Activated T-helper 1 cell treated with anti-CD3 and anti-CD28 coated beads, Interleukin-12 subunit alpha, Interleukin-12 subunit beta, Interleukin-2, Interleukin-4 antibody, amounts not matched to agents 30 ng/mL and 10 ng/mL and 1 ng/mL, durations not matched to agents 14 hours and 24 hours and 36 hours (primary cell): ENCODE measurements at regions of chr2 and their contacts with region 1.

Region 1: DNA sequence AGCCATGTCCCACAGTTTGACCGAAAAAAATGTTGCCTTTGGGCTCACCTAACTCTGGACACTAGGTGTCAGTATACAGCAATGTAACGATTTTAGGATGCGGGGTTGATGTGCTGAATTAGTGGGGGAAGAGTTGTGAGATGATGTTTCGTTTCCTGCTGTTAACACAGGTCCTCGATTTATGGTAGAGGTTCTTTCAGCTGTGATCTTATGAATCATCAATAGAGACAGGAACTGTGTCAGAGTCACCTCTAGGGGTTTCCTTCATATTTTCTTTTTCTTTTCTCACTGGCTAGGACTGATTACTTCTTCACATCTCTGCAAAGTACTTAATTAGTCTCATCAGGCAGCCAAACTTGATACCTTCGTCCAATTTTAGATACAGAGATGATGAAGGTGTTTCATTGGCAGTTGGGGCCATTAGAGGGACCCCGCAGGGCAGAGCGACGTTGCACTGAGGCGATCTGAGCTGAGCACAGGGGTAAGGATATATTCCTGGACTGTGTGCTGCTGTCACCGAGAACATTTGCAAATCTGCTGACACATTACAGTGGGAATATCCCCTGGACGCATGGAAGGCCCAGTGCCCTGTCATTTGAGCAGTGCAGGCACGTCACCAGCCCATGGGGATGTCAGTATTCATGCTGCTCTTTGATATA is 10.2 kb upstream of the MMADHC start:
- DNase-seq: peak; percentile 38
- H3K4me3 Mint-ChIP-seq: no peak overlapping the region
- H3K27ac Mint-ChIP-seq: peak overlapping the region; percentile 15
- H3K4me1 Mint-ChIP-seq: peaks cover 23% of the 10 kb centered on the region
- H3K27me3 Mint-ChIP-seq: peaks cover 14% of the 10 kb centered on the region

Region 2: DNA sequence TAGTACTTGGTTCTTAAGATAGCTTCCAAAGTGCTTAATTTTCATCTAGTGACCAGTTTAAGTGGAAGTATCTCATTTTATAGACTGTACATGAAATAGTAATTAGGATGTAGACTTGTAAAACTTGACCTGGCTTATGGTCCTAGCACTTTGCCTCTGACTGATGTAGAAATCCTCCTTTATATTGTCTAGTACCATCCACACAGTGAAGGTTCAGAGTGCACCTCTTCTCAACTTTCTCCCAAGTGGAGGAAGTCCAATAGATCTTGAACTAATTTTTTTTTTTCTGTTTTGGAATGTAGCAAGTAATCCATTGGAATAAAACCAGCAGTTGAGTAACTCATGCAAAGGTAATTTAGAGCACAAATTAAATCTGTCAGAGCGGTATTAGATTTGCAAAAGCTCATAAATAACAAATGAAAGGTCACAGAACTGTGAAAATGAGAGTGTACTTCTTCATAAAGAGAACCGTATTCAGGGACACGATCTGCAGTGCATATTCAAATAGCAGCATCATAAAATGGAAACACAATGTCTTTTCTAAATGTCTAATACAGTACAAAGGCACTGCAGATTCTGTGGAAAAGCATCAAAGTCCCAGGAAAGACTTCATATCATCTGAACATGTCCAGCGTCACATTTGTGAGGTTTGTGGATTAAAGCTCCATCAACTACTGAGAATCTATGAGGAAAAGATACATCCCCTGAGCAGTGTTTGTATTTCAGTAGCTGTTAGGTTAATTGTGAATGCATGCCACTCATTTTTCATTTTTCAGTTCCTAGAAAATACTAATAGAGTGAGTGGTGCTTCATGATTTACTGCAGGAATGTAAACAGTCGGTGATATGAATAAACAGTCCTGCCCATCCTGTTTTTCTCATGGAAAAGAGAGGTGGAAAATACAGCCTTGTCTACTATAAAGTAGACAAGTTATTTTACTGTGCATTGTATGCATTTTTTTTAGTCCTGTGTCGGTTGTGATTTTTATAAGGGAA is 166.8 kb before region 1 on chr2:
- intact Hi-C with region 1: no loop called
- DNase-seq: no peak
- H3K4me3 Mint-ChIP-seq: no peak overlapping the region
- H3K27ac Mint-ChIP-seq: no peak overlapping the region
- H3K4me1 Mint-ChIP-seq: no peaks in the 10 kb centered on the region
- H3K27me3 Mint-ChIP-seq: peaks cover 1% of the 10 kb centered on the region

Region 3: GRCh38 chr2:149648282-149649030 is 50.7 kb after region 1 on chr2:
- intact Hi-C with region 1: no loop called
- DNase-seq: no peak
- H3K4me3 Mint-ChIP-seq: no peak overlapping the region
- H3K27ac Mint-ChIP-seq: no peak overlapping the region
- H3K4me1 Mint-ChIP-seq: no peaks in the 10 kb centered on the region
- H3K27me3 Mint-ChIP-seq: no peaks in the 10 kb centered on the region

Region 4: DNA sequence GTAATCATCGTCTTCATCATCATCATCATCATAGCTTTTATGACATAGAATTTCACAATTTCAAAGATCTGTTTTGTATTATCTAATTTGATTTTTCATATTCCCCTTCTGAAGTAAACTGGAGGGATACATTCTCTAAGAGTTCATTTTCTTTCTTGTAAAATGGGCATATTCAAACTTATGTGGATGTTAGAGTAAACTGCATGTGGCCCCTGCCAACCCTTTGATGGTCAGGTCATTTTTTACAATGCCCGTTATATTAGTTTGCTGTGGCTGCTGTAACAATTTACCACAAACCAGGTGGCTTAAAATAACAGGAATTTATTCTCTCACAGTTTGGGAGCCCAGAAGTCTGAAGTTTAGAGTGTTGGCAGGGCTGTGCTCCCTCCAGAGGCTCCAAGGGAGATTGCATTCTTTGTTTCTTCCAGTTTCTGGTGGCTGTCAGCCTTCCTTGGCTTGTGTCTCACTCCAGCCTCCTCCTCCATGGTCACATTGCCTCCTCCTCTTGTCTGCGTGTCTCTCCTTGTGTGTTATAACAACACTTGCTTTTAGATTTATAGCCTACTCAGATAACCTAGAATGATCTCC is 117.3 kb after region 1 on chr2:
- intact Hi-C with region 1: loop called (anchors 5 kb)
- DNase-seq: no peak
- H3K4me3 Mint-ChIP-seq: no peak overlapping the region
- H3K27ac Mint-ChIP-seq: no peak overlapping the region
- H3K4me1 Mint-ChIP-seq: no peaks in the 10 kb centered on the region
- H3K27me3 Mint-ChIP-seq: peaks cover 1% of the 10 kb centered on the region

Region 5: GRCh38 chr2:149816756-149817551 is 219.2 kb after region 1 on chr2:
- intact Hi-C with region 1: no loop called
- DNase-seq: no peak
- H3K4me3 Mint-ChIP-seq: no peak overlapping the region
- H3K27ac Mint-ChIP-seq: no peak overlapping the region
- H3K4me1 Mint-ChIP-seq: no peaks in the 10 kb centered on the region
- H3K27me3 Mint-ChIP-seq: no peaks in the 10 kb centered on the region

Region 6: GRCh38 chr2:150023044-150023443 is 425.2 kb after region 1 on chr2:
- intact Hi-C with region 1: loop called (anchors 2 kb)
- DNase-seq: peak; percentile 12
- H3K4me3 Mint-ChIP-seq: no peak overlapping the region
- H3K27ac Mint-ChIP-seq: no peak overlapping the region
- H3K4me1 Mint-ChIP-seq: no peaks in the 10 kb centered on the region
- H3K27me3 Mint-ChIP-seq: no peaks in the 10 kb centered on the region

Region 7: DNA sequence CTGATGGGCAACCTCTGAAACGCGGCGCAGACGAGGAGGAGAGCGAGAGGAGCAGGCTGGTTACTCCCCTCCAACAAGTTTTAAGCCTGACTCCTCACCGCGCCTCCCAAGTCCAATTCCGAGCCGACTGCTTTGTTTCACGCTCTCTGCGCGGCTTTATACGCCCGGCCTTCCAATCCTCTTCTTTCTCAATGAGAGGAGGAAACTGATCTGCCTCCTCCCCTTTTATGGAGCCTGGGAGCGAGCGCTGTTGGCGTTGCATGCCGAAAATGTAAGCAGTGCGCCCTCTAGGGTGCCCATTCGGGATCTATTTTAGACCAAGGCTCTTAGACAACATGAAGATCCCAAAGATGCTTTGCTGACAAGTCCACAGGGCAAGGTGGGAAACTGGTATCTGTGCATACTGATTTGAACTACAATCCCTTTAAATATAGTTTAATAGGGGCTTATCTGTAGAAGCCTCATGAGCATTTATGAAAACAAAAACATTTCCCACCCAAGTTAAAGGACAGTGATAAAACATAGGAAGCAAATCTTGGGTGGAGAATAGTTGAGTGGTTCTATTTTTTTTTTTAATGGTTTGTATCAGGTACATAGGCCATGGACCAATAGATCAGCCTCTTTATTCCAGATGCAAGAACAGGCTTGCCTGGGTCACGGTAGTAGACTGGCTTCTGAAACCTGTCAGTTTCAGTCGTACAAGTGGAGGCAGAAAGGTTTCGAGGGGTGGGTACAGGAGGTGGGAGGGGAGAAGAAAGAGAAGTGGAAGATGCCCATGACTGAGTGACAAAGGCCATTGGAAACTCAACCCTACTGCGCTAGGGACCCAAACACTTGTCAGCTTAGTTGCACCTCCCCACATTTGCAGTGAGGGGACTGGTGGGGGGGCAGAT is 890.0 kb after region 1 on chr2 and contains the start of gene RND3:
- intact Hi-C with region 1: loop called (anchors 1 kb)
- DNase-seq: peak; percentile 34
- H3K4me3 Mint-ChIP-seq: peak within 1 kb of the TSS; percentile 66
- H3K27ac Mint-ChIP-seq: no peak within 1 kb of the TSS
- H3K4me1 Mint-ChIP-seq: peaks cover 13% of the 10 kb centered on the region
- H3K27me3 Mint-ChIP-seq: peaks cover 59% of the 10 kb centered on the region
- total RNA-seq, gene RND3: not detected in 2 replicates

Region 8: DNA sequence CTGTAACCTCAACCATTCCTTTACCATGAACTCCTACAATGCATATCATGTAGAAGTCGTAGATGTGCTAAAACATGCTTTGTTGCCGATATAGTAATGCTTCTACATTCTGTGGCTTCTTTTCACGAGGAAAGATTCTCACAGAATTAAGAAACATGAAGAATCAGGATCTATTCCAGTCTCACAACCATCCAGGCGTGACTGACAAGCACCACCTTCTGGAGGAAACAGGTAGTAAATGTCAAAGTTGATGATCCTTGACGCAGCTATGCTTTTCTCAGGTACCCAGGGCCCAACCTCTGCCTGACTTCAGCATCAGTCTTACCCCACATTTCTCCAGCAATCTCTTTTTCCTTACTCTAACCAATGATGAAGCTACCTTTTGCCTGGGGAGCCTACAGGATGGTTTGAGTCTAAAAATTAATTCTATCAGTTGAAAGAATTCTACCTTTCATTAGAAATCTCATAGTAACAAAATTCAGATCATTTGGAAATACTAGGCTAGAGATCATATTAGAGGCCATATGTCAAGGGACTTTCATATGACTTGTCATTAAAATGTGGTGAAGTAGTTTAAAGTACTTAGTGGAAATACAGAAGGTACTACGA is 1013.0 kb after region 1 on chr2:
- intact Hi-C with region 1: loop called (anchors 1 kb)
- DNase-seq: no peak
- H3K4me3 Mint-ChIP-seq: no peak overlapping the region
- H3K27ac Mint-ChIP-seq: no peak overlapping the region
- H3K4me1 Mint-ChIP-seq: no peaks in the 10 kb centered on the region
- H3K27me3 Mint-ChIP-seq: no peaks in the 10 kb centered on the region

Region 9: DNA sequence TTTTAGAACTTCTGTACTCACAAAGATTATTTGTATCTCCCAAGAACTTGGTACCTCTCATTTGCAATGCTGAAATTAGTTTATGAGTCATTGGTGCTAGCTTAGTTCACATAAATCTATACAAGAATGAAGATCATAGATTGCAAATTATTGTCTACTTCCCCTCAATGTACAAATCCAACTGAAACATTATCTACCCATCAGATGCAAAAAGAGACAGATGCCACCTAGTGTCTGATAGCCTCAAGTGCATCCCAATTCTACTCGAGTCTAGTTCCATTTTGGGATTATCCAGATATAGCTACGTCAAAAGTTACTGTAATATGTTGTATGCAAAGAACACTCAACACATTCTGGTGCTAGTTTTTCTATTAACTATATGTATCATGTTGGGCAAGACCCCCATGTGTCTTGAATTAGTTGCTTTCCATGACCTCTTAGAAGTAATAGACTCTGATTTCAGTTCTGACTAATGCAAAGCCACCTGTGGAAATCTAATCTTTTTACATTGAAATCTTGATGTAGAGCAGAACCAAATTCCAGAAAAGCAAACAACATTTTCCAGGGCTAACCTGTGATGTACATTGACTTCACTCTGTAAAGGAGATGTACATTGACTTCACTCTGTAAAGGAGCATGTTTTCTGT is 1453.9 kb after region 1 on chr2:
- intact Hi-C with region 1: loop called (anchors 1 kb)
- DNase-seq: no peak
- H3K4me3 Mint-ChIP-seq: no peak overlapping the region
- H3K27ac Mint-ChIP-seq: no peak overlapping the region
- H3K4me1 Mint-ChIP-seq: no peaks in the 10 kb centered on the region
- H3K27me3 Mint-ChIP-seq: peaks cover 1% of the 10 kb centered on the region

Region 10: GRCh38 chr2:151238527-151239487 is 1641.0 kb after region 1 on chr2:
- intact Hi-C with region 1: loop called (anchors 1 kb)
- DNase-seq: no peak
- H3K4me3 Mint-ChIP-seq: no peak overlapping the region
- H3K27ac Mint-ChIP-seq: no peak overlapping the region
- H3K4me1 Mint-ChIP-seq: no peaks in the 10 kb centered on the region
- H3K27me3 Mint-ChIP-seq: peaks cover 9% of the 10 kb centered on the region